GM12878 (cell line): ENCODE measurements at regions of chr18 and their contacts with region 1.

Region 1: GRCh38 chr18:4096486-4096885 is 358.6 kb downstream of the DLGAP1 start:
- DNase-seq: no peak
- ATAC-seq: no peak
- H3K4me3 ChIP-seq: no peak overlapping the region
- H3K27ac ChIP-seq: no peak overlapping the region
- H3K4me1 ChIP-seq: no peaks in the 10 kb centered on the region
- H3K27me3 ChIP-seq: no peaks in the 10 kb centered on the region
- CTCF ChIP-seq: no peak
- EP300 ChIP-seq: no peak
- POLR2A ChIP-seq: no peak
- RAD21 ChIP-seq: no peak

Region 2: DNA sequence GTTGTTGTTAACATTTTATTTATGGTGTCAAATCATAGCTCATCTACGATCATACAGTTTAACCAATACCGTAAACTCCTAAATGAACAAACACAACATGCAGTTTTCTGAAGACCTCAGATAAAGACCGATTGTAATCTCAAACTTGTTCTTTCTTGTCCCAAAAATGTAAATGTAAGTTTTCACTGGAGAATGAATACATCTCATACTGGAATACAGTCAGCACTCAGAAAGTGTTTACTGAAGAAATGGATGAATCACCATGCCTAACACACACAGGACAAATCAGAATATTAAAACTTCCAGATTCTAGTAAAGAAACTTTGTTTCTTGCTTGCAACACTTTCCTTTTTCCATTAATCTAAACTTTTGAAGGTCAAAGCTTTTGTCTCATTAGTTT is 21.8 kb before region 1 on chr18:
- CTCF ChIA-PET with region 1: interaction called, 4 read pairs
- POLR2A ChIA-PET with region 1: interaction called, 6 read pairs
- RAD21 ChIA-PET with region 1: interaction called, 5 read pairs
- SMC1A ChIA-PET with region 1: interaction called, 28 read pairs
- in situ Hi-C with region 1: no loop called
- intact Hi-C with region 1: no loop called
- DNase-seq: no peak
- ATAC-seq: no peak
- H3K4me3 ChIP-seq: no peak overlapping the region
- H3K27ac ChIP-seq: no peak overlapping the region
- H3K4me1 ChIP-seq: no peaks in the 10 kb centered on the region
- H3K27me3 ChIP-seq: no peaks in the 10 kb centered on the region
- CTCF ChIP-seq: no peak
- EP300 ChIP-seq: no peak
- POLR2A ChIP-seq: no peak
- RAD21 ChIP-seq: no peak

Region 3: GRCh38 chr18:4084382-4084900 is 12.0 kb before region 1 on chr18:
- CTCF ChIA-PET with region 1: interaction called, 6 read pairs
- POLR2A ChIA-PET with region 1: interaction called, 6 read pairs
- RAD21 ChIA-PET with region 1: interaction called, 6 read pairs
- SMC1A ChIA-PET with region 1: interaction called, 28 read pairs
- in situ Hi-C with region 1: no loop called
- intact Hi-C with region 1: no loop called
- DNase-seq: no peak
- ATAC-seq: peak; percentile 56
- H3K4me3 ChIP-seq: no peak overlapping the region
- H3K27ac ChIP-seq: no peak overlapping the region
- H3K4me1 ChIP-seq: no peaks in the 10 kb centered on the region
- H3K27me3 ChIP-seq: no peaks in the 10 kb centered on the region
- CTCF ChIP-seq: no peak
- EP300 ChIP-seq: no peak
- POLR2A ChIP-seq: no peak
- RAD21 ChIP-seq: no peak